Heart right ventricle (tissue), 16 donors: ENCODE measurements at regions of chr17 and their contacts with region 1.

Region 1: DNA sequence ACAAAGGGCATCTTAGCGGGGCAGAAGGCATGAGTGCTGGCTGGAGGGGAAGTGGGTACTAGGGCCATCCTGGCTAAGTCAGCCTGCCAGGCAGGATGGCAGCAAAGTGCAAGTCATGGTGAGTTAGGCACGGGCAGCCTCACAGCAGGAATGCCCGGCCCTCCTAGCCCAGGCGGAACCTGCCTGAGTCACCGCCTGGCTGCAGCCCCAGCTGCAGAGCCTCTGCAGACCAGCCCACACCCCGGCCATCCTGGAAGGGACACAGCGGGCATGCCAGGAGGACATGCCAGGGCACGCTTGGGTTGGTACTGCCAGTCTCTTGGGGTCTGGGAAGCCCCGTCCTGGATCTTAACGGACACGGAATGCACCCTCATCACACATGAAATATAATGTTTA is 4.9 kb upstream of the ALDH3A1 start:
- DNase-seq: peak; percentile 64 to 67
- ATAC-seq: peak; percentile 86 to 99 (median 96)
- H3K4me3 ChIP-seq: no peak overlapping the region
- H3K27ac ChIP-seq: peak overlapping the region; percentile 20 to 85 (median 71)
- H3K4me1 ChIP-seq: peaks cover 0 to 15% (median 6%) of the 10 kb centered on the region in 9 donors
- H3K27me3 ChIP-seq: peaks cover 0 to under 1% (median 0%) of the 10 kb centered on the region in 7 donors
- CTCF ChIP-seq: no peak

Region 2: DNA sequence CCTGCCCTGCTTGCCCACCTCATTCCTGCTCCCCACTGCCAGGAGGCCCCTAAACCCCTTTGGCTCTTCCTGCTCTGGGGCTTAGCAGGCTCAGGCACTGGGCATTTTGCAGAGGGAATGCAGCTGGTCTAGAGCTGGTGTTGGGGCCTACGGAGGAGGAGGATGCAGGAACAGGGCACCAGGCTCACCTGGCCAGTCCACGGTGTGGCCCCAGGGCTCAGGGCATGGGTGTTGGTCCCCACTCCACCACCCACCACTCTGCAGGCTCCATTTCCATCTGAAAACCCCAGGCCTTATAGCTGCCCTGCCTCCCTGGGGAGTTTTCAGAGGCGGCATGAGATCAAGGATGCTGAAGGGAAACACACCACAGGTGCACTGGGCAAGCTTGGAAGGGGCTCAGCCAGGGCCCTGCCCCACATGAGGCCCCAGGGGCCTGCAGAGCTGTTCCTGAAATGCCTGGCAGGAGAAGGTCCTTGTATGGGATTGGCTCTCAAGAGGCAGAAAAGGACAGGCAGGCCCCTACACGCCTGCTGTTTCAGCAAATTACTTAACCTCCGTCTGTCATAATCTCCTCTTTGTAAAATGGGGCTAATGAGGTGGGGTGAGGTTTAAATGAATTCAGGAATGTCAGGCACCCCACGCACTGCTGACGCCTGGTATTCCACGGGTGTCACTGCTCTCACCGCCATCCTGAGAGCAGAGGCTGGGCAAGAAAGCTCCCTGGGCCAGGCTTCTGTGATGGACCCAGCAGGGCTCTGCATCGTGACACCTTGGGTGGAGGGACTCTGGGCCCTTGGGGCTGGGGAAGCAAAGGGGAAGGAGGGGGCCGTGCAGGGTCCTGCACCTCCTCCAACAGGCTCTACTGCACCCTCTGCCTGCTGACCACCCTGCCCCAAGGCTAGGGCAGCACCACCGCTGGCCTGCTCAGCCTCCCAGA is 46.0 kb before region 1 on chr17:
- intact Hi-C with region 1: loop called in 1 of 10 experiments (anchors 10 kb)
- DNase-seq: no peak
- ATAC-seq: peak in 1 of 8 donors; percentile 10
- H3K4me3 ChIP-seq: no peak overlapping the region
- H3K27ac ChIP-seq: no peak overlapping the region
- H3K4me1 ChIP-seq: peaks cover 0 to 28% (median 20%) of the 10 kb centered on the region in 9 donors
- H3K27me3 ChIP-seq: no peaks in the 10 kb centered on the region
- CTCF ChIP-seq: no peak

Region 3: DNA sequence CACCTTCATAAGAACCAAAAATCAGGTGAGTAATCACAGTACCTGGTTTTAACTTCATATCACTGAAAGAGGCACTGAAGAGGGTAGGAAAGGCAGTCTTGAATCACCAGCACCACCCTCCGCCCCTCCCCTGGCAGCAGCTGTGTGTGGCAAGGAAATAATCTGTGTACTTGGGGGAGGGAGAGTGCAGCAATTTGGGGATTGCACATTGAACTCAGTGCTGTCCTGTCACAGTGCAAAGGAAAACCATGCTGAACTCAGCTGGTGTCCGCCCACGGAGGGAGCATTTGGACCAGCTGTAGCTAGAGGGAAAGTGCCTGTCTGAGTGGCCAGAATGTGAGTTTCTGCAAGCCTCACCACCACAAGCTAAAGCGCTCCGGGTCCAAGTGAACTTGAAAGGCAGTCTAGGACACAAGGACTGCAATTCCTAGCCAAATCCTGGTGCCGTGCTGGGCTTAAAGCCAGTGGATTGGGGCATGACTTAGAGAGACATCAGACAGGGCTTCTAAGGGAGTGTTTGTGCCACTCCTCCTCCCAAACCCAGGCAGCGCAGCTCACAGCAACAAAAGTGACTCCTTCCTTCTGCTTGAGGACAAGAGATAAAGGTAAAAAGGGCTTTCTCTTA is 34.8 kb after region 1 on chr17:
- intact Hi-C with region 1: no loop called
- DNase-seq: no peak
- ATAC-seq: no peak
- H3K4me3 ChIP-seq: no peak overlapping the region
- H3K27ac ChIP-seq: no peak overlapping the region
- H3K4me1 ChIP-seq: no peaks in the 10 kb centered on the region
- H3K27me3 ChIP-seq: no peaks in the 10 kb centered on the region
- CTCF ChIP-seq: no peak